ENCODE measurements at regions of chr7 and their contacts with region 1.

Region 1: GRCh38 chr7:65872776-65873581 is at the start of gene VKORC1L1:
- DNase-seq: peak; percentile 90 to 98 (median 94)
- ATAC-seq: peak; percentile 86
- H3K4me3 ChIP-seq: peak within 1 kb of the TSS; percentile 48 to 69
- H3K4me3 Mint-ChIP-seq: peak within 1 kb of the TSS; percentile 85
- H3K27ac ChIP-seq: peak within 1 kb of the TSS in 1 of 2 experiments; percentile 54
- H3K27ac Mint-ChIP-seq: peak within 1 kb of the TSS; percentile 66
- H3K4me1 ChIP-seq: no peaks in the 10 kb centered on the region
- H3K4me1 Mint-ChIP-seq: peaks cover 8% of the 10 kb centered on the region
- H3K27me3 ChIP-seq: no peaks in the 10 kb centered on the region
- H3K27me3 Mint-ChIP-seq: no peaks in the 10 kb centered on the region
- CTCF ChIP-seq: no peak
- total RNA-seq, gene VKORC1L1: 1.4 to 2.0 TPM

Region 2: DNA sequence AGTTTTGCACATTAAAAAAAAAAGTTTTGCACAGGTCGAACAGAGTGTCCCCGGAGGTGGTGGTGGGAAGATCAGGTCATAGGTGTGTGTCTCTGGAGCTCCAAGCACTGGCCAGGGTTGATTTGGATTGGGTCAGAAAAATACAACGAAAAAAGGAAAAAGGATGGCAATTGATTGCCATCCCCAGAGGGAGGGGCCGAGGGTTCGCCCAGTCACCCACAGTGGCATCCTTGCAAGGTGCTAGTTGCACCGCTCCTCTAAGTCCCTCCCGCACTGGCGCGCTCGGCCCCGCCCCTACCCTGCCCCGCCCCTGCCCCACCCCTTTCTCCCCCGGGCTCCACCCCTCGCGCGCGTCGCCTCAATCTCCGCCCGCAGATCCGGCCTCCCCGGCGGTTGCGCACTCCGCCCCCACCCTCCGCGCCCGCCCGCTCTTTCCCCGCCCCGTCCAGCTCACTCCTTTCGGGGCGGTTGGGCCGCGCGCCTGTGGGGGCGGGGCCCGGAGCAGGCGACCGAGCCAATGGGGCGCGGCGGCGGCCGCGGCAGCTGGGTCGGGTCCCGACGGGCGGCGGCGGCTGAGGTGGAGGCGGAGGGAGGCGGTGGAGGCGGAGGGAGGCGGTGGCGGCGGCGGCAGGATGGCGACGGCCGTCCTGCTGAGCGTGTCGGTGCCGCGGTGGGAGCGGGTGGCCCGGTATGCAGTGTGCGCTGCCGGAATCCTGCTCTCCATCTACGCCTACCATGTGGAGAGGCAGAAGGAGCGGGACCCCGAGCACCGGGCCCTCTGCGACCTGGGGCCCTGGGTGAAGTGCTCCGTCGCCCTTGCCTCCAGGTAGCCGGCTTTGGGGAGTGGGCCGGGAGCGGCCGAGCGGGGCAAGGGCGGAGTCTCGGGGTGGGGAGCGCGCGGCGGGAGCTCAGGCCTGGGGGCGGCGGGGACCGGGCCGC is 835.0 kb before region 1 on chr7:
- CTCF ChIA-PET with region 1: no interaction called
- POLR2A ChIA-PET with region 1: no interaction called
- intact Hi-C with region 1: loop called in 1 of 2 experiments (anchors 5 kb)
- DNase-seq: peak; percentile 87 to 97 (median 94)
- ATAC-seq: peak; percentile 89
- H3K4me3 ChIP-seq: peak overlapping the region; percentile 52 to 69
- H3K4me3 Mint-ChIP-seq: peak overlapping the region; percentile 79
- H3K27ac ChIP-seq: peak overlapping the region; percentile 62 to 74
- H3K27ac Mint-ChIP-seq: peak overlapping the region; percentile 80
- H3K4me1 ChIP-seq: peaks cover 11% of the 10 kb centered on the region
- H3K4me1 Mint-ChIP-seq: peaks cover 14% of the 10 kb centered on the region
- H3K27me3 ChIP-seq: no peaks in the 10 kb centered on the region
- H3K27me3 Mint-ChIP-seq: no peaks in the 10 kb centered on the region
- CTCF ChIP-seq: peak; percentile 16

Region 3: GRCh38 chr7:65981965-65982792 is 109.2 kb after region 1 on chr7 and contains the start of gene GUSB:
- CTCF ChIA-PET with region 1: no interaction called
- POLR2A ChIA-PET with region 1: no interaction called
- intact Hi-C with region 1: loop called (anchors 1 kb)
- DNase-seq: peak; percentile 80 to 93 (median 90)
- ATAC-seq: peak; percentile 87
- H3K4me3 ChIP-seq: peak within 1 kb of the TSS; percentile 83 to 90
- H3K4me3 Mint-ChIP-seq: peak within 1 kb of the TSS; percentile 85
- H3K27ac ChIP-seq: peak within 1 kb of the TSS; percentile 69 to 73
- H3K27ac Mint-ChIP-seq: peak within 1 kb of the TSS; percentile 88
- H3K4me1 ChIP-seq: peaks cover 18% of the 10 kb centered on the region
- H3K4me1 Mint-ChIP-seq: peaks cover 14% of the 10 kb centered on the region
- H3K27me3 ChIP-seq: no peaks in the 10 kb centered on the region
- H3K27me3 Mint-ChIP-seq: no peaks in the 10 kb centered on the region
- CTCF ChIP-seq: no peak
- total RNA-seq, gene GUSB: 37.0 to 41.8 TPM

Region 4: GRCh38 chr7:66114793-66115649 is 242.0 kb after region 1 on chr7 and contains the start of gene CRCP:
- CTCF ChIA-PET with region 1: no interaction called
- POLR2A ChIA-PET with region 1: no interaction called
- intact Hi-C with region 1: loop called (anchors 1 to 10 kb)
- DNase-seq: peak; percentile 74 to 94 (median 86)
- ATAC-seq: peak; percentile 91
- H3K4me3 ChIP-seq: peak within 1 kb of the TSS; percentile 95 to 97
- H3K4me3 Mint-ChIP-seq: peak within 1 kb of the TSS; percentile 98
- H3K27ac ChIP-seq: peak within 1 kb of the TSS; percentile 93 to 97
- H3K27ac Mint-ChIP-seq: peak within 1 kb of the TSS; percentile 97
- H3K4me1 ChIP-seq: peaks cover 35% of the 10 kb centered on the region
- H3K4me1 Mint-ChIP-seq: peaks cover 50% of the 10 kb centered on the region
- H3K27me3 ChIP-seq: no peaks in the 10 kb centered on the region
- H3K27me3 Mint-ChIP-seq: no peaks in the 10 kb centered on the region
- CTCF ChIP-seq: no peak
- total RNA-seq, gene CRCP: 38.0 to 42.4 TPM

Region 5: DNA sequence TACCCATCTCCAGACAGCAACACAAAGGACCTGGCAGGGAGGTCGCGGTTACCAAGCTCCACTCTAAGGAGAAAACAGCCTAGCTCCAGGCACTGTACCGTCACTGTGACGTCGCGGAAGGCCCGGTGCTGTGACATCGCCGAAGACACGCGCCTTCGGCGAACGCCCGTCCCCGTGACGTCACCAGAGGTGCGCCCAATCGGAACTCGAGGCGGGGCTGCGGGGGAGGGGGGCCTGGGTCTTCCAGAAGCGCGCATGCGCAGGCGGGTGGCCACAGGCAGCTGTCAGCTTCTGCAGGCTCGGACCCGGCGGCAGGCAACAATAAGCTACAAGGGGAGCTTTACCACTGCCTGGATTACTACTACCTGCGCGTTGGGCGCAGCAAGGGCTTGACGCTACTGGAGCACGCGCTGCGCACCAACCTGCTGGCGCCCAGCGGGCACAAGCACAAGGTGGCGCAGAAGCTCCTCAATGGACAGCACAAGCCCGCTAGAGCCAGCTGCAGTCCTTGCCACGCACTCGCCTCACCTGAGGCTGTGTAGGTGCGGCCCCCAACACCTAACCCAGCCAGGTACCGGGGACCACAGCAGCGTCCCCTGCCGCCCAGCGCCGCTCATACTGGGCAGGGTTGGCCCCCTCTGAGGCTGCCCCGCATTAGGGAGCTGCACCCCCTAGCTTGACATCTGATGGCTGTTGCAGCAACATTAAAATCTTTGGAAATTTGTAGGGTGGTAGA is 540.6 kb after region 1 on chr7:
- CTCF ChIA-PET with region 1: no interaction called
- POLR2A ChIA-PET with region 1: no interaction called
- intact Hi-C with region 1: loop called in 1 of 2 experiments (anchors 10 kb)
- DNase-seq: peak; percentile 62 to 91 (median 85)
- ATAC-seq: peak; percentile 86
- H3K4me3 ChIP-seq: peak overlapping the region; percentile 56 to 62
- H3K4me3 Mint-ChIP-seq: peak overlapping the region; percentile 80
- H3K27ac ChIP-seq: peak overlapping the region; percentile 39 to 43
- H3K27ac Mint-ChIP-seq: peak overlapping the region; percentile 87
- H3K4me1 ChIP-seq: peaks cover 15% of the 10 kb centered on the region
- H3K4me1 Mint-ChIP-seq: peaks cover 12% of the 10 kb centered on the region
- H3K27me3 ChIP-seq: no peaks in the 10 kb centered on the region
- H3K27me3 Mint-ChIP-seq: no peaks in the 10 kb centered on the region
- CTCF ChIP-seq: peak; percentile 50

Region 6: DNA sequence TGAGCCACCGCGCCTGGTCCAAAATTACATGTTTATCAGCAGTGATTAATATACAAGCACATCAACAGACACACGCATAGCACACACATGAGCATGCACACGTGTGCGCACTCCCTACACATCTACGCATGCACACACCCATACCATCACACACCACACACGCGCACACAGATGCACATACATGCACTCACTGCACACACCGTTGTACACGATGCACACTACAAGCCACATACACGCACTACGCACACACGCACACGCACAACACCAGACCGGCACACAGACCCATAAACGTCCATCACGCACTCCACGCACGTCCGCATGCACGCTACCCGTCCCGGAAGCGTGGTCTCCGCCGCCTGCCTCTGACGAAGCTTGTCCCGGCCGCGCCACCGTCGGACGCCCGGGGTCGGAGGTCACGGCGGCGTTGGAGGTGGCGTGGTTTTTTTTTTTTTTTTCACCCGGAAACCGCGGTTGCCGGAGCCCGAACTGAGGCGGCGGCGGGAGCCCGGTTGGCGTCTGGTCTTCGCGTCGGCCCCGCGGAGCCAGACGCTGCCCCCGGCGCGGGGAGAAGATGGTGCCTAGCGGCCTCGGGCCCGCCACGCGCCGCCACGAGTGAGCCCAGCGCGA is 1047.9 kb after region 1 on chr7 and contains the start of gene TMEM248:
- CTCF ChIA-PET with region 1: no interaction called
- POLR2A ChIA-PET with region 1: no interaction called
- intact Hi-C with region 1: loop called in 1 of 2 experiments (anchors 5 kb)
- DNase-seq: peak; percentile 84 to 96 (median 91)
- ATAC-seq: peak; percentile 90
- H3K4me3 ChIP-seq: peak within 1 kb of the TSS; percentile 83 to 94
- H3K4me3 Mint-ChIP-seq: peak within 1 kb of the TSS; percentile 98
- H3K27ac ChIP-seq: peak within 1 kb of the TSS; percentile 75 to 80
- H3K27ac Mint-ChIP-seq: peak within 1 kb of the TSS; percentile 97
- H3K4me1 ChIP-seq: peaks cover 20% of the 10 kb centered on the region
- H3K4me1 Mint-ChIP-seq: peaks cover 37% of the 10 kb centered on the region
- H3K27me3 ChIP-seq: no peaks in the 10 kb centered on the region
- H3K27me3 Mint-ChIP-seq: no peaks in the 10 kb centered on the region
- CTCF ChIP-seq: no peak
- total RNA-seq, gene TMEM248: 67.2 to 72.1 TPM